Transverse colon (tissue), 4 donors: ENCODE measurements at regions of chr5 and their contacts with region 1.

Region 1: GRCh38 chr5:128498844-128499455 is 39.1 kb downstream of the FBN2 start:
- DNase-seq: no peak
- H3K4me3 ChIP-seq: no peak overlapping the region
- H3K27ac ChIP-seq: no peak overlapping the region
- H3K4me1 ChIP-seq: no peaks in the 10 kb centered on the region
- H3K27me3 ChIP-seq: no peaks in the 10 kb centered on the region
- CTCF ChIP-seq: peak in 4 of 5 experiments; percentile 23 to 47 (median 40)
- EP300 ChIP-seq: no peak
- POLR2A ChIP-seq: no peak

Region 2: DNA sequence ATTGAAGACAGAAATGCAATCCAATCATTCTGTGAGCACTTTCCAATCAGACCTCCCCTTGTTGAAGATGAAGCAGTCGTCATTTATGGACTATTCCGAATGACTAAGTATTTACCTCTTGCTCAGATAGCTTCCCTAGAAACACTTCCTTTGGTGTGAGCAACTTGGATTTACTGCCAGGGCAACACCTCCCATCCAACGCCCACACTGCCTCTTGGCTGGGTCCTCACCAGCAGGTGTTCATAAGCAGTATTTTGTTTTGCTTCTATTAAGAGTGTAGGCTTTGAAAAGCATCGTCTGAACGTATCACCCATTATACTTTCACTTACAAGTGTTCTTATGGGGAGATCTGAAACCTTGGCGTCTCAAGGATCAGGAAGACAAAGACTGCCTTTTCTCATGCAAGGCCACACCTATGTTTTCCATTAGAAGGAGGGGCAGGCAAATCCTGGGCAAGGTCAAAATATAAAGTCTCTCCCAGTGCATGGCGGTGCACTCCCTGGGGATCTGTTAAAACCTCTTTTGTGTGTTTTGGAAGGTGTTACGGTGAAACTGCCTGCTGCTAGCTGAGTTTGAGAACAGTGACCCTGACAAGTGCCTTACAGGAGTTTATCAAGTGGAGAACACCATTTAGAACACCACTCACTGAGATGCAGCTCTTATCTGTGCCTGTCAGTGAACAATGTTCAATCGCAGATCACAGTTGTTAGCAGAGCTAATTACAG is 1458.0 kb before region 1 on chr5:
- in situ Hi-C with region 1: no loop called
- intact Hi-C with region 1: loop called (anchors 5 kb)
- DNase-seq: peak; percentile 56
- H3K4me3 ChIP-seq: peak overlapping the region in 2 of 4 donors; percentile 3 to 32
- H3K27ac ChIP-seq: peak overlapping the region; percentile 77 to 88 (median 84)
- H3K4me1 ChIP-seq: peaks cover 3 to 33% (median 13%) of the 10 kb centered on the region in 4 donors
- H3K27me3 ChIP-seq: no peaks in the 10 kb centered on the region
- CTCF ChIP-seq: peak in 1 of 5 experiments; percentile 11
- EP300 ChIP-seq: no peak
- POLR2A ChIP-seq: peak; percentile 53

Region 3: DNA sequence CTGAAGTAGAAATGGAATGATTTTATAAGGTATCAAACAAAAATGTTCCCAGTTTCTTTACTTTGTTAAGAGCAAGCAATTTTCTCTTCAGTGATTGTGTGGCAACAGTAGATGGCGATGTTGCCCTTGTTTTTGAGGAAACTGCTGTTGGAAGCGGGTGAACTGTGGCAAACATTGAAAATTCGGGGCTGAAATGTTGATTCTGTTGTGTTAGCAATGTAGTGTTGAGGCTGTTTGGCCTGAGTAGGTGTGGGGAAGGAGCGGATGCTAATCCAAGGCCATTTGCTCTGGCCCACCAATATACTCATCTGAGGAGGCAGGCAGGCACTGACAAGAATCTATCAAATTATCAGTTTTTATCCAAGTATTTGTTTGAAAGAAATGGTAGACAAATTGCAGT is 285.6 kb before region 1 on chr5:
- in situ Hi-C with region 1: loop called in 3 of 4 experiments (anchors 5 to 10 kb)
- intact Hi-C with region 1: loop called (anchors 10 kb)
- DNase-seq: peak; percentile 41
- H3K4me3 ChIP-seq: no peak overlapping the region
- H3K27ac ChIP-seq: no peak overlapping the region
- H3K4me1 ChIP-seq: no peaks in the 10 kb centered on the region
- H3K27me3 ChIP-seq: no peaks in the 10 kb centered on the region
- CTCF ChIP-seq: peak; percentile 59 to 70 (median 68)
- EP300 ChIP-seq: no peak
- POLR2A ChIP-seq: no peak

Region 4: GRCh38 chr5:128225245-128226030 is 273.5 kb before region 1 on chr5:
- in situ Hi-C with region 1: loop called in 1 of 4 experiments (anchors 5 kb)
- intact Hi-C with region 1: no loop called
- DNase-seq: no peak
- H3K4me3 ChIP-seq: no peak overlapping the region
- H3K27ac ChIP-seq: no peak overlapping the region
- H3K4me1 ChIP-seq: no peaks in the 10 kb centered on the region
- H3K27me3 ChIP-seq: no peaks in the 10 kb centered on the region
- CTCF ChIP-seq: no peak
- EP300 ChIP-seq: no peak
- POLR2A ChIP-seq: no peak

Region 5: GRCh38 chr5:128854931-128855330 is 356.0 kb after region 1 on chr5:
- in situ Hi-C with region 1: no loop called
- intact Hi-C with region 1: no loop called
- DNase-seq: no peak
- H3K4me3 ChIP-seq: no peak overlapping the region
- H3K27ac ChIP-seq: no peak overlapping the region
- H3K4me1 ChIP-seq: no peaks in the 10 kb centered on the region
- H3K27me3 ChIP-seq: no peaks in the 10 kb centered on the region
- CTCF ChIP-seq: no peak
- EP300 ChIP-seq: no peak
- POLR2A ChIP-seq: no peak